Transverse colon (tissue), 4 donors: ENCODE measurements at regions of chr15 and their contacts with region 1.

Region 1: GRCh38 chr15:82111918-82112317 is 66.1 kb upstream of the MEX3B start:
- DNase-seq: no peak
- H3K4me3 ChIP-seq: no peak overlapping the region
- H3K27ac ChIP-seq: no peak overlapping the region
- H3K4me1 ChIP-seq: no peaks in the 10 kb centered on the region
- H3K27me3 ChIP-seq: no peaks in the 10 kb centered on the region
- CTCF ChIP-seq: no peak
- EP300 ChIP-seq: no peak
- POLR2A ChIP-seq: no peak

Region 2: DNA sequence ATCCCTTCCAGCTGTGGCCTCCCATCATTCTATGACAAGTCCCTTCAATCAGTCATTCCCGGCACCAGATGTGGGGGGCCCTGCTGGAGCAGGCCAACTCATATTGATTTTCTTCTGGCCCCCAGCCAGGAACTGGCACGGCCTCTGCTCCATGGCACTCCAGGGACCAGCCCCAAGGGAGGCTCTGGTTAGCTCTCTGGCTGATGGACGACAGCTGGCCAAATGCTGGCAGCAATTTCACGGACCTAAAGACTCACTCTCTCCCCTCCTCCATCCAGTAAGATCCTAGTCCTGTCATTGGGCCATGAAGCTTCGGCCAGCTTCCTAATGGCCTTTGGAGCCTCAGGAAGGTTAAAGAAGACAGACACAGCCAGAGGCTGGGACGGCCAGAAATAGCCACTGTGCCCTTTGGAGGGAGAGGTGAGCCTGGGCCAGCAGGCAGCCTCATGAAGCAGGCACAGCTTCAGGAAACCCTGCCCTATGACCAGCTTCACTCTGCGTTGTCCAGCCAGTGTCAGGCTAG is 197.1 kb before region 1 on chr15:
- in situ Hi-C with region 1: no loop called
- intact Hi-C with region 1: no loop called
- DNase-seq: no peak
- H3K4me3 ChIP-seq: no peak overlapping the region
- H3K27ac ChIP-seq: no peak overlapping the region
- H3K4me1 ChIP-seq: peaks cover 2 to 6% (median 4%) of the 10 kb centered on the region in 4 donors
- H3K27me3 ChIP-seq: no peaks in the 10 kb centered on the region
- CTCF ChIP-seq: no peak
- EP300 ChIP-seq: no peak
- POLR2A ChIP-seq: no peak

Region 3: DNA sequence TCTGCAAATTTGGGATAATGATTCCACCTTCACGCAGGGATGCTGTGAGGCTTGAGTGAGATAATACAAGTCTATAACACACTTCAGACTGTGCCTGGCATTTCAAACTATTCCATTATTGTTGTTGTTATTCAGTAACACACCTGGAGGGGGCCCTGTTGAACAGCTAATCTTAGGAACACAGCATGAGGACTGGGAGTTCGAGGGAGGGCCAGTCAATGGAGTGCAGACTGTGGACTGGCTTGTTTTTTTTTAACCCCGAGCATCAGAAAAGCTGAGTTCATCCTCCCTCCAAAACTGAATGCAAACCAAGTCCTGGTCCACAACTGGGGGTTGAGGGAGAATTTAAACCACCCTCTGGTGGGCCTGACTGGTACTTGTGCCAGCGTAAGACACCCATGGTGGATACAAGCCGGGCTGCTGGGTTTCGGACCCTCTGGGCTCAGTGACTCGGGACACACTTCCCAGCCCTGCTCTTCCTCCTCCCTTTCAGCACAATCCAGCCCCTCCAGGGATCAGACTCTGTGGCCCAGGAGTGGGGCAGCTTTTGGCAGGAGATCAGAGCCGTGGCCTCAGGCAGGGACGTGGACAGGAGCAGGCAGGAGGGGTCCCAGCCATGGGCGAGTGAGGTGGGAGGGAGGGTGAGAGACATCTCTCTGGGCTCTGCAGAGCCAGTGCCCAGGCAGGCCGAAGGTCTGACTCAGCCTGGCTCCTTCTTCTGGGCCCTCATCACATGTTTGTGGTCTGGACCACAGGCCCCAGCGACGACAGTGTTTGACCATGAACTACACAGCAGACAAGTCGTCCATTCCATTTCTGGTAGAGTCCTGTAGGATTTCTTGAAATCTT is 29.8 kb before region 1 on chr15:
- in situ Hi-C with region 1: no loop called
- intact Hi-C with region 1: loop called (anchors 1 kb)
- DNase-seq: no peak
- H3K4me3 ChIP-seq: no peak overlapping the region
- H3K27ac ChIP-seq: no peak overlapping the region
- H3K4me1 ChIP-seq: no peaks in the 10 kb centered on the region
- H3K27me3 ChIP-seq: peaks cover 8% of the 10 kb centered on the region
- CTCF ChIP-seq: no peak
- EP300 ChIP-seq: no peak
- POLR2A ChIP-seq: no peak

Region 4: DNA sequence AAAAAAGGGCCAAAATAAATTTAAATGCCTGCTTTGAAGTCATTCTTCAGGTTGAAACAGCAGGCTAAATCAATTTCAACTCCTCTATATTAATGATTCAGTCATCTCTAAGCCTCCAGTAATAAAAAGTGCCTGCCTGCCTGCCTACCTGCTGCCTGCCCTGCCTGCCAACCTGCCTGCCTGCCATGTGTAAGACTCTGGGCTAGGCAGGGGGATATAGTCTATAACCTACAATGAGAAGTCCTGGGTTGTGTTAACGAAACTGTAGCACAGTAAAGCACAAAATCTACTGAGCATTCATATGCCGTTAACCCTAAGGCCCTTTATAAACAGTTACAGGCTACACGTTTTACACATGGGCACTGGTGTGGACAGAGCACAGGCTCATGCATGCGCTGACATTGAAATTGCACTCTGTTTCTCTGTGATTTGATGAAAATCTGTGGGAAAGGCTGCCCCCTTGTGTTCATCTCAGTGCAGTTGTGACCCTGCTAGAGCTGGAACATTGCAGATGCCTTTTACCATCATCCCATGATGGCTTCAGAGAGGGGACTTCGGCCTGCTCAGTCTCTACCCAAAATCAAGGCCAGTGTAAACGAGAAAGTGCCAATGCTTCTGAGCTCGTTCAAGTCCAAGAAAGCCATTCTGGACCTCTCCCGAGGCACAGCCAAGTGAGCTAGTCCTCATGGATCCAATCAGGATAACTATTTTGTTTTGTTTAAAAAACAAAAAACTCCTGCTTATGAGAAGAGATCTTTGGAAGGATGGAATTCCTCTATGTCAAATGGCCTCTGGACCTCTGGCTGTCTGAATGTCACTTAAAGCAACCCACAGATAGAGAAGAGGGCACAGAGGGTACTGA is 86.0 kb after region 1 on chr15:
- in situ Hi-C with region 1: no loop called
- intact Hi-C with region 1: no loop called
- DNase-seq: peak; percentile 60
- H3K4me3 ChIP-seq: no peak overlapping the region
- H3K27ac ChIP-seq: no peak overlapping the region
- H3K4me1 ChIP-seq: no peaks in the 10 kb centered on the region
- H3K27me3 ChIP-seq: no peaks in the 10 kb centered on the region
- CTCF ChIP-seq: peak; percentile 59 to 73 (median 70)
- EP300 ChIP-seq: no peak
- POLR2A ChIP-seq: no peak

Region 5: DNA sequence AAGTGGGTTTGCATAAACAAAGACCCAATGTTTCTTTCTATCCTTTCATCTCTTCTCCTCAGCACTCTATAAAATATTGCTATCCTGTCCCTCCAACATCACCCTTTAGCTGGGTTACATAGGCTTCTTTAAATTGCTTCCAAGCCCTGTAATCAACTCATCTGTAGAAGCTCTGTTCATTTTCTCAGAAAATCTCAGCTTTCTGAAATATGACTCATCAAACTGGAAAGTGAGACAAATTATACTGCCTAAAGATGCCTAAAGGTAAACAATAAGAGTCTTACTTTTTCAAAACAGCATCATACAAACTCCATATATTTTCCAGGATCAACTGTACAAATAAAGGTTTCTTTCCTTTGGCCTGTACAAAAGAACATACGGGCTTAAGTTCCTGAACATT is 116.8 kb after region 1 on chr15:
- in situ Hi-C with region 1: no loop called
- intact Hi-C with region 1: no loop called
- DNase-seq: no peak
- H3K4me3 ChIP-seq: no peak overlapping the region
- H3K27ac ChIP-seq: no peak overlapping the region
- H3K4me1 ChIP-seq: peaks cover 0 to 21% (median 13%) of the 10 kb centered on the region in 4 donors
- H3K27me3 ChIP-seq: no peaks in the 10 kb centered on the region
- CTCF ChIP-seq: no peak
- EP300 ChIP-seq: no peak
- POLR2A ChIP-seq: no peak